BJ (cell line): ENCODE measurements at regions of chr9 and their contacts with region 1.

Region 1: GRCh38 chr9:18208154-18209059 is 265.5 kb upstream of the ADAMTSL1 start:
- DNase-seq: no peak
- H3K4me3 ChIP-seq: no peak overlapping the region
- H3K27me3 ChIP-seq: peaks cover 3% of the 10 kb centered on the region
- CTCF ChIP-seq: peak; percentile 62

Region 2: DNA sequence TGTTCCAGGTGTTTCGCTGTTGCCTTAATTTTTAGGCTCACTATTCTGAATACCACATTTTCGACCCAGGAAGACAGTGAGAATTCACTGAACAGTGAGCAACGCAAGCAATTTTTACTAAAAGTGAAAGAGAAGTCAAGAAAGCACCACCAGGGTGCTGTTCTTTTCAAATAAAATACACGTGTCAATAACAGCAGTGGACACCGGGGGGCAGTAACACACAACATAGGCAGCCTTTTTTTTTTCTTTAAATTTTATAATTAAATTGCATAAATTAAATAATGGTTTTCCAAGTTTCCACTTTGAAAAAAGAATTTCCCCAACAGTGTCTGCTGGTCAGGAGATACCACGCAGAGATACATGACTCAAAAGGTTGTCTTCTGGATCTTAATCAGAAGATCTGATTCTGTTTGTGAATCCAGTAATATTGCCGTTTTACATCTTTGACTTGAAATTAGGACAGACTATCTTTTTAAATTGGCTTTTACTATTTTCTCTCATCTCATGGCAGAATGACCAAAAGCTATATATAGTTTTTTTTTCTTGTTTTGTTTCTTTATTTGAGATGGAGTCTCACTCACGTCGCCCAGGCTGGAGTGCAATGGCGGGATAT is 676.7 kb before region 1 on chr9:
- CTCF ChIA-PET with region 1: interaction called, 10 read pairs
- POLR2A ChIA-PET with region 1: no interaction called
- DNase-seq: no peak
- H3K4me3 ChIP-seq: no peak overlapping the region
- H3K27me3 ChIP-seq: 0 out of 2 replicates have a peak, but pooled peaks cover 2% of the 10 kb centered on the region
- CTCF ChIP-seq: peak; percentile 72

Region 3: DNA sequence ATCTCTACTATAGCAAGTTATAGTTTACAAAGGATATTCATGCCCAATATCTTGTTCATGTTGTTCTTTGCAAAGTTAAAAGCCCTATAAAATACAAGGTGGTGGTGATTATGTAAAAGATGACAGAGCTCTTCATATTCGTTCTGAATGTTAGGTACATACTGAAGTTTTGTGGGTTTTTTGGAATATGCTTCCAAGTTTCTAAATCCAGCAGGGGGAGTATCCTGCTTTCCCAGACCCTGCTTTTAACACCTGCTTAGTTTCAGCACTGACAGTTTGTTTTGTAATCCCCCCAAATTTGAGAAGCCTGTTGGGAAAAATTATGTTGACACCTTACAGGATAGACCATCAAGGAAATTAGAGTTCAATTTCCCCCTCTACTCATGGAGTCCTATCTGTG is 191.3 kb before region 1 on chr9:
- CTCF ChIA-PET with region 1: interaction called, 10 read pairs
- POLR2A ChIA-PET with region 1: no interaction called
- DNase-seq: no peak
- H3K4me3 ChIP-seq: no peak overlapping the region
- H3K27me3 ChIP-seq: peaks cover 1% of the 10 kb centered on the region; the same call in 1 of the 2 replicates
- CTCF ChIP-seq: no peak

Region 4: DNA sequence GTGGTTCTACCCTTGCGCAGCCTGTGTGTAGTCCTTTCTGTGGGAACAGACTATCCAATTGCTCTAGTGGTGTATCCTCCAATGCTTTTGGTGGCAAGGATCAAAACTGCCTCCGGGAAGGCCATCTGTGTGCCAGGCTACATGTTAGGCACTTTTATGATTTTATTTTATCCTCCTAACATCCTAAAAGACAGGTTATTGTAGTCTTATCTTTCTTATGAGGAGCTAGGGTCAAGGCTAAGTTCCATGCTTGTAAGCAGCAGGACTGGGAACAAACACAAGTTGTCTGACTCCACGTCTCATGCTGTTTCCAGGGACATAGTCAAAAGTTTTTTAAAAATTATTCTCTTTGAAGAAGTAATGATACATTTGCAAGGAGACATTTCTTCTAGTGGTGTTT is 13.2 kb before region 1 on chr9:
- CTCF ChIA-PET with region 1: interaction called, 13 read pairs
- POLR2A ChIA-PET with region 1: no interaction called
- DNase-seq: no peak
- H3K4me3 ChIP-seq: no peak overlapping the region
- H3K27me3 ChIP-seq: no peaks in the 10 kb centered on the region; the same call in none of the 2 replicates
- CTCF ChIP-seq: no peak

Region 5: GRCh38 chr9:18319918-18320445 is 111.6 kb after region 1 on chr9:
- CTCF ChIA-PET with region 1: no interaction called
- POLR2A ChIA-PET with region 1: no interaction called
- DNase-seq: no peak
- H3K4me3 ChIP-seq: no peak overlapping the region
- H3K27me3 ChIP-seq: no peaks in the 10 kb centered on the region
- CTCF ChIP-seq: peak; percentile 23; the same call in 1 of the 2 replicates

Region 6: DNA sequence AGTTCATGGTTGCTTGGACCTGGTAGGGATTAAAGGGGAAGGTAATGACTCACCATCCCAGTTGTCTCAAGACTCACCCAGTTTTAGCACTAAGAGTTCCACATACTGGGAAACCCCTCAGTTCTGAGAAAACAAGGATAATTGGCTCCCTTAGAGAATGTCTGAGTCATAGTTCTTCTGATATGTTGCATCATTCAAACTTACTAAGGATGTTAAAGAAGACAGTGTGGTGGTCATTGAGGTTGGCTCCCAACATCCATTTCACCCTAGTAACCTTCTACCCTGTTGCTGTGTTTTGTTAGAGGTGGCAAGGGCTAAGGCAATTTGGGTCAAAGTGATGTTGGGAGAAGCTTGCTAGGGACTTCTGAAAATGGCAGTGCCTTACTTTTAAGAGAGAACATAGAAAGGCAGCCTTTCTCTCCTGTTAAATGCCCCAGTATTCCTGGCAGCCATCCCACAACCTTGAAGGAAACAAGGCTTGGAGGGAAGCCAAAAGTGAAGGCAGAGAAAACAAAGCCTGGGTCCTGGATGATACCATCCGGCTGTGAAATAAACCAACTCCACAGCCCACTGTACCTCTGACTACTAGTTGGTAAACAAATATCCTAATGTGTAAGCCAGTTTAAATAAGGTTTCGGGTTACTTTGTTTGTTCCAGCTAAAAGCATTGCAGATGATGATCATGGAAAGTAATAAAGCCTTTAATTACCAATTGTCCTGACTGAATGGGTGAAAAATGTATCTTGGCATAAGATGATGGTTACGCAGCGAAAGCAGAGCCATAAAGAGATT is 185.1 kb after region 1 on chr9:
- CTCF ChIA-PET with region 1: no interaction called
- POLR2A ChIA-PET with region 1: no interaction called
- DNase-seq: peak; percentile 75
- H3K4me3 ChIP-seq: no peak overlapping the region
- H3K27me3 ChIP-seq: no peaks in the 10 kb centered on the region
- CTCF ChIP-seq: no peak